Naive thymus-derived CD4-positive, alpha-beta T cell (primary cell): ENCODE measurements at regions of chr22 and their contacts with region 1.

Region 1: DNA sequence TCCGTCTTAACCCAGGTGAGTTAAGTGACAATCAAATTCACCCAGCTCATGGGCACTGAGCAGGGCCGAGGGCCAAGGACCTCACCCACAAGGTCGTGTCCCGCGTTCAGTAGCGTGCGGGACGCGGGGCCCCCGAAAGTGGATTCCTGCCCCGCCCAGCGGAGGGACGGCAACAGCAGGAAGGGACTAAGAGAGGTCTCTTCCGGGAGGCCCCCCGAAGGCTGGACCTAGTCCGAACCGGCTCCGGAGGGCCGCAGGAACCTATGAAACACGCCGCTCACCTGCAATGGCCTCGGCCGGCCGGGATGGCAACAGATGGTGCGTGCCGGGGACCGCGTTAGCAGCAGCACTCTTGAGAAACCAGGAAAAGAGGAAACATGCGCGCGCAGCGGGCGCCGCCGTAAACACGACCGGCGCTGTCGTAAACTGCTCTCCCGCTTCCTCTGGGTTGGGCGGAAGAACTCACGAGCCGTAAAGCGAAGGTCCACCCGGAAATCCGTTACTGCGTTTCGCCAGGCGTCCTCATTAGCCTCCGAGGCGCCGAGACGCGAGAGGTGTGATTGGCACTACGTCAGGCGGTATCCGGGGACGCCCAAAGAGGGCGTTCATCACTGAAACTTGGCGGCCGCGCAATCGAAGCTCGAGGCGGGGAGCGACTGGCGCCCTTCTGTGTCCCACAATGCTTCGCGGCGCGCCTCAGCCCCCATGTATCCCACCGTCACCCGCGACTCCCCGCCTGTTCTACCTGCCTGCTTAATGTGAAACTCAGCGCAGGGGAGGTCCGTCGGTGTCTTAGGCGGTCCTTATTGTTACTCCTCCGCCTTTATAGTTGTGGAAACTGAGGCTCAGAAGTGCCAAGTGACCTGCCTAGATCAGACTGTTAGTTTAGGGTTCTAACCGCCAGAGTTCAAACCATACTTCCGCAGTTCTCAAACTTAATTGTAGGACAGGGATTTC is at the start of gene EIF3D:
- DNase-seq: peak; percentile 93 to 100 (median 99)
- ATAC-seq: peak; percentile 94
- H3K4me3 ChIP-seq: peak within 1 kb of the TSS; percentile 84
- H3K4me3 Mint-ChIP-seq: peak within 1 kb of the TSS; percentile 78 to 98 (median 96)
- H3K27ac ChIP-seq: peak within 1 kb of the TSS; percentile 92
- H3K27ac Mint-ChIP-seq: peak within 1 kb of the TSS; percentile 94 to 99 (median 98)
- H3K4me1 ChIP-seq: peaks cover 4 to 12% of the 10 kb centered on the region in 2 donors
- H3K4me1 Mint-ChIP-seq: peaks cover 11 to 23% (median 21%) of the 10 kb centered on the region in 7 donors
- H3K27me3 ChIP-seq: no peaks in the 10 kb centered on the region
- H3K27me3 Mint-ChIP-seq: peaks cover 0 to 4% (median 0%) of the 10 kb centered on the region in 5 donors
- total RNA-seq, gene EIF3D: 220 to 257 (median 232) TPM

Region 2: DNA sequence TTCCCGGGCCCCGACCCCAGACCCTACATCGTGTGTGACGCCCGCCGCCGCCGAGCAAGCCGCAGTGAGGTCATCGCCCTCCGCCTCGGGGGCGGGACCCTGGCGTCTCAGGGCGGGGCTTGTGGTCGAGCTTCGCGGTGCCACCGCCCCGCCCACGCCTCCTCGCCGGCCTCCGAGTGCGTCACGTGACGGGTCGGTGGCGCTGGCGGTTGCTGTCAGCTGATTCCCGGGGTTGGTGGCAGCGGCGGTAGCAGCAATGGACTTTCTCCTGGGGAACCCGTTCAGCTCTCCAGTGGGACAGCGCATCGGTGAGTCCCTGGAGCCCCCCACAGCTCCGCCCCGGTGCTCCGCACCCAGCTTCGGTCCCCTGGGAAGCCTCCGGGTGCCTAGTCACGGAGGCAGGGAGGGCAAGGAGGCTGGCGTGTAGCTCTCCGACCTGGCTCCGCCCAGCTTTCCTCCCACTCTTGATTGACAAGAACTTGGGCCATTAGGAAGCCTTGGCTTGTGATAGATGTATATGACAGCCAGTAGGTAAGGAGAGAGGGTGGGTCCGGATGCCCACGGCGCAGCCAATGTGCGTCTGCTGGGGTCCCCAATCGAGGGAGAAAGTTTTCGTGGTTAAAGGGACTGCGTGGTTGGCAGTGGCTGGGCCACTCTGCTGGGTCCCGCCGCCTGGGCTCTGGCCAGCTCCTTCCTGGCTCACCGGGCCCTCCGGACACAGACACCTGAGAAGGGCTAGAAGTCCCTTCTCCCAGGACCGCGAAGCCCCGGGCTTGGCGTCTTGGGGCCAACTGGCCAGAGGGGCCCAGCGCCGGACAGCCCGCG is 1229.2 kb before region 1 on chr22 and contains the start of gene TOM1:
- CTCF ChIA-PET with region 1: no interaction called
- POLR2A ChIA-PET with region 1: no interaction called
- intact Hi-C with region 1: loop called in 1 of 2 experiments (anchors 2 kb)
- DNase-seq: peak; percentile 96 to 100 (median 98)
- ATAC-seq: peak; percentile 91
- H3K4me3 ChIP-seq: peak within 1 kb of the TSS; percentile 77
- H3K4me3 Mint-ChIP-seq: peak within 1 kb of the TSS; percentile 89 to 99 (median 94)
- H3K27ac ChIP-seq: peak within 1 kb of the TSS; percentile 95
- H3K27ac Mint-ChIP-seq: peak within 1 kb of the TSS; percentile 94 to 100 (median 98)
- H3K4me1 ChIP-seq: peaks cover 10% of the 10 kb centered on the region in 2 donors
- H3K4me1 Mint-ChIP-seq: peaks cover 13 to 50% (median 38%) of the 10 kb centered on the region in 7 donors
- H3K27me3 ChIP-seq: no peaks in the 10 kb centered on the region
- H3K27me3 Mint-ChIP-seq: no peaks in the 10 kb centered on the region
- total RNA-seq, gene TOM1: 36.5 to 225 (median 62.1) TPM

Region 3: GRCh38 chr22:36239401-36240171 is 289.5 kb before region 1 on chr22 and contains the start of gene APOL2:
- CTCF ChIA-PET with region 1: no interaction called
- POLR2A ChIA-PET with region 1: no interaction called
- intact Hi-C with region 1: loop called in 1 of 2 experiments (anchors 1 kb)
- DNase-seq: peak; percentile 52 to 88 (median 79)
- ATAC-seq: peak; percentile 99
- H3K4me3 ChIP-seq: peak within 1 kb of the TSS; percentile 94
- H3K4me3 Mint-ChIP-seq: peak within 1 kb of the TSS; percentile 93 to 99 (median 99)
- H3K27ac ChIP-seq: peak within 1 kb of the TSS; percentile 76
- H3K27ac Mint-ChIP-seq: peak within 1 kb of the TSS; percentile 94 to 99 (median 98)
- H3K4me1 ChIP-seq: peaks cover 23 to 33% of the 10 kb centered on the region in 2 donors
- H3K4me1 Mint-ChIP-seq: peaks cover 44 to 55% (median 53%) of the 10 kb centered on the region in 7 donors
- H3K27me3 ChIP-seq: no peaks in the 10 kb centered on the region
- H3K27me3 Mint-ChIP-seq: peaks cover 0 to 10% (median 0%) of the 10 kb centered on the region in 5 donors
- total RNA-seq, gene APOL2: 30.1 to 133 (median 66.9) TPM

Region 4: DNA sequence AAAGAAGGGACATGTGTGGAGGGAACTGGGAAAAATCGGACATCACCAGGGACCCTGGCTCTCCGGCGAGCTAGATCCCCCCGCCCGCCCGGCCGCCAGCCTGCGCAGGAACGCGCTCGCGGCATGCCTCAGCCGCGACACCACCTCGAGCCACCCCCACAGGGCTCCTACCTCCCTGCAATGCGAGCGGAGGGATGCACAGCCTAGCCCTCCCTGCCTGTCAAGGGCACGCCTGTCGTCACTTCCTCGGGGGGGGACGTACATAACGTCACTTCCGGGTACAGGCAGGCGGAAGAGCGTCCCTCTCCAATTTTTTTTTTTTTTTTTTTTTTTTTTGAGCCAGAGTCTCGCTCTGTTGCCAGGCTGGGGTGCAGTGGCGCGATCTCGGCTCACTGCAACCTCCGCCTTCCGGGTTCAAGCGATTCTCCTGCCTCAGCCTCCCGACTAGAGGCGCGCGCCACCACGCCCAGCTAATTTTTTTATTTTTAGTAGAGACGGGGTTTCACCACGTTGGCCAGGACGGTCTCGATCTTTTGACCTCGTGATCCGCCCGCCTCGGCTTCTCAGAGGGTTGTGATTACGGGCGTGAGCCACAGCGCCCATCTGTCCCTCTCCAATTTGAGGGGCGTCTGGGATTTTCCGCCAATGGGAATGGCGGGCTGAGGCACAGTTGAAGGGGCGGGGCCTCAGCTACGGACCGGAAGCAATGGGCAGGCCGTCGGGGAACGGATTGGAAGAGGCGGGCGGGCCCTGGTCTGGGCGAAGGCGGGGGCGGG is 47.5 kb before region 1 on chr22 and contains the start of gene TXN2:
- CTCF ChIA-PET with region 1: no interaction called
- POLR2A ChIA-PET with region 1: interaction called, 16 read pairs
- intact Hi-C with region 1: loop called (anchors 1 kb)
- DNase-seq: peak; percentile 91 to 99 (median 98)
- ATAC-seq: peak; percentile 90
- H3K4me3 ChIP-seq: peak within 1 kb of the TSS; percentile 55
- H3K4me3 Mint-ChIP-seq: peak within 1 kb of the TSS; percentile 90 to 100 (median 96)
- H3K27ac ChIP-seq: peak within 1 kb of the TSS; percentile 96
- H3K27ac Mint-ChIP-seq: peak within 1 kb of the TSS; percentile 78 to 99 (median 95)
- H3K4me1 ChIP-seq: peaks cover 8 to 15% of the 10 kb centered on the region in 2 donors
- H3K4me1 Mint-ChIP-seq: peaks cover 15 to 30% (median 18%) of the 10 kb centered on the region in 7 donors
- H3K27me3 ChIP-seq: no peaks in the 10 kb centered on the region
- H3K27me3 Mint-ChIP-seq: peaks cover 0 to 2% (median 0%) of the 10 kb centered on the region in 5 donors
- total RNA-seq, gene TXN2: 35.5 to 69.9 (median 37.7) TPM

Region 5: GRCh38 chr22:36775964-36776669 is 247.0 kb after region 1 on chr22 and contains the start of gene IFT27:
- CTCF ChIA-PET with region 1: interaction called, 9 read pairs
- POLR2A ChIA-PET with region 1: interaction called, 8 read pairs
- intact Hi-C with region 1: loop called (anchors 1 kb)
- DNase-seq: peak; percentile 72 to 99 (median 98)
- ATAC-seq: peak; percentile 92
- H3K4me3 ChIP-seq: peak within 1 kb of the TSS; percentile 65
- H3K4me3 Mint-ChIP-seq: peak within 1 kb of the TSS; percentile 85 to 97 (median 92)
- H3K27ac ChIP-seq: peak within 1 kb of the TSS; percentile 90
- H3K27ac Mint-ChIP-seq: peak within 1 kb of the TSS; percentile 92 to 99 (median 96)
- H3K4me1 ChIP-seq: peaks cover 13 to 15% of the 10 kb centered on the region in 2 donors
- H3K4me1 Mint-ChIP-seq: peaks cover 18 to 44% (median 31%) of the 10 kb centered on the region in 7 donors
- H3K27me3 ChIP-seq: no peaks in the 10 kb centered on the region
- H3K27me3 Mint-ChIP-seq: no peaks in the 10 kb centered on the region
- total RNA-seq, gene IFT27: 16.6 to 40.9 (median 32.0) TPM

Region 6: GRCh38 chr22:37051391-37052385 is 522.6 kb after region 1 on chr22 and contains the start of gene KCTD17:
- CTCF ChIA-PET with region 1: no interaction called
- POLR2A ChIA-PET with region 1: no interaction called
- intact Hi-C with region 1: loop called (anchors 1 kb)
- DNase-seq: peak; percentile 50 to 87 (median 67)
- ATAC-seq: peak; percentile 99
- H3K4me3 ChIP-seq: peak within 1 kb of the TSS; percentile 74
- H3K4me3 Mint-ChIP-seq: peak within 1 kb of the TSS; percentile 73 to 94 (median 86)
- H3K27ac ChIP-seq: peak within 1 kb of the TSS; percentile 72
- H3K27ac Mint-ChIP-seq: peak within 1 kb of the TSS in 8 of 9 donors; percentile 40 to 89 (median 80)
- H3K4me1 ChIP-seq: peaks cover 0 to 7% of the 10 kb centered on the region in 2 donors
- H3K4me1 Mint-ChIP-seq: peaks cover 5 to 15% (median 14%) of the 10 kb centered on the region in 7 donors
- H3K27me3 ChIP-seq: no peaks in the 10 kb centered on the region
- H3K27me3 Mint-ChIP-seq: no peaks in the 10 kb centered on the region
- total RNA-seq, gene KCTD17: 19.8 to 44.5 (median 24.9) TPM